Colonic mucosa (tissue), 4 donors: ENCODE measurements at regions of chr11 and their contacts with region 1.

Region 1: DNA sequence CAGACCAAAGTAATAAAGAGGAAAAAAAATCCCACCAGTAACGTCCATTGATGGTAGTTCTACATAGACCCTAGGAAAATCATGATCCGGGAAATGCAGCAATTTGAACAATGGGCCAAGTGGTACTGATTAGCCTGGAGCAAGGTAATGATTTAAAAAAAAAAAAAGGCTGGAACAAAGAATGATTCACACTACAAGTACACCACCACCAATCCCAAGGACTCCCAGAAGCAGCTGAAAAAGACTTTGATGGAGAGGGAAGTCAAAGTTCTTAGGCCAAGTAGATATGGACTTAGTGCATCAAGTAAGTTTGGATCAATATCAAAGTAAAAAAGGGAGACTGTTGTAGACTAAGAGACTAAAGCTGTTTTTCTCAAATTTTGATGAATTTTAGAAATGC is 11.8 kb downstream of the KCTD14 start:
- DNase-seq: no peak
- H3K4me3 ChIP-seq: no peak overlapping the region
- H3K27ac ChIP-seq: no peak overlapping the region
- H3K4me1 ChIP-seq: no peaks in the 10 kb centered on the region
- H3K27me3 ChIP-seq: no peaks in the 10 kb centered on the region
- CTCF ChIP-seq: no peak

Region 2: DNA sequence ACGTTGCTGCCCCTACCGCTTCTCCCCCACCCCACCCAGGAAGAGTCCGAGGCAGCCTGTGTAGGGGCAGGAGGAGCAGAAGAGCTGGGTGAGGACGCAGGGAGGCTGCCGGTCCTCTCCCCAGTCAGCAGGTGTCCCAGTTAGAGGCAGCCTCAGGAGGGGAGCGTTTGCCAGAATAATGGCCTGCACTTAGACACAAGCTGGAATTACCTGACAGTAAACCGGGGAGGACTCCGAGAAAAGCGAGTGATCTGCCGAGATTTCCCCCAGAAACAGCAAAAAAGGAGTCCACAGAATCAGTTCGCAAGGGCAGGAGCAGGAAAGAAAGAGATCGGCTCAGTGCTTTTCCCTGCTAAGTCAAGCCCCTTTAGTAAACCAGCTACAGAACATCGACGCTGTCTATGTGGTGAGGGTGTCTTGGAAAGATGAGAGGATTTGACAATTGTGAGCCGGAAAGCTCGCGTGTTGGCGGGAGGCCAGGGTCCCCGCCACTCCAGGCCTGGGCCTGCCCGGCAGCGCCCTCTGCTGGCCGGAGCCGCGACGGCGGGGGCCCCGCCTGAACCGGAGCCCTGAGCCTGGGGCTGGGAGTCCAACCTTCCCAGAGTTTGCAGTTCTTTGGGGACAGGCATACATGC is 34.7 kb after region 1 on chr11:
- intact Hi-C with region 1: loop called (anchors 5 kb)
- DNase-seq: peak; percentile 84
- H3K4me3 ChIP-seq: peak overlapping the region; percentile 34
- H3K27ac ChIP-seq: no peak overlapping the region
- H3K4me1 ChIP-seq: no peaks in the 10 kb centered on the region
- H3K27me3 ChIP-seq: no peaks in the 10 kb centered on the region
- CTCF ChIP-seq: peak; percentile 99